Posterior vena cava (tissue), 2 donors: ENCODE measurements at regions of chr5 and their contacts with region 1.

Region 1: DNA sequence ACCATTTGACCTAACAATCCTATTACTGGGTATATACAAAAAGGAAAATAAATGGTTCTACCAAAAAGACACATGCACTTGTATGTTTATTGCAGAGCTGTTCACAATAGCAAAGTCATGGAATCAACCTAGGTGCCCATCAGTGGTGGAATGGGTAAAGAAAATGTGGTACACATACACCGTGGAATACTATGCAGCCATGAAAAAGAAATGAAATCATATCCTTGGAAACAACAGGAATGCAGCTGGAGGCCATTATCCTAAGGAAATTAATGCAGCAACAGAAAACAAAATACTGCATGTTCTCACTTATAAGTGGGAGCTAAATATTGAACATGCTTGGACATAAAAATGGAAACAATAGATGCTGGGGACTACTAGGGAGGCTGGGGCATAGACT is 534.1 kb upstream of the SGCD start:
- DNase-seq: no peak

Region 2: GRCh38 chr5:155631116-155631515 is 161.8 kb before region 1 on chr5:
- intact Hi-C with region 1: no loop called
- DNase-seq: no peak

Region 3: DNA sequence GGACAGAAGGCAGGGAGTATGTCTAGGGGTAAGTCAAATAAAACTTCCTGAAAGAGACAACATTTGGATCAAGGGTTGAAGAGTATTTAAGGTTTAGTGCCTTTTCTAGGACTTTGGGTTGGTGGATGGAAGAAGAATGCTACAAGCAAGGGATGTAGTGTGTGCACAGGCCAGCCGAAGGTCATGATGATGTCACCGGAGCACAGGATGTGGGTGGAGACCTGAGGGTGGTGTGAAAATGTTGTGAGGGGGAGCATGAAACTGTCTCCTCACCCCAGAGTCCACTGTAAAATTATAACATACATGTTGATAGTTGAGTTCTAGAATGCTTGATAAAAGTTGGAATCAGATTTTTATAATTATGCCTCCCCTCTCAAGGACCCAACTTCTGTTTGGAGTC is 19.2 kb before region 1 on chr5:
- intact Hi-C with region 1: loop called in 1 of 2 experiments (anchors 1 kb)
- DNase-seq: no peak

Region 4: DNA sequence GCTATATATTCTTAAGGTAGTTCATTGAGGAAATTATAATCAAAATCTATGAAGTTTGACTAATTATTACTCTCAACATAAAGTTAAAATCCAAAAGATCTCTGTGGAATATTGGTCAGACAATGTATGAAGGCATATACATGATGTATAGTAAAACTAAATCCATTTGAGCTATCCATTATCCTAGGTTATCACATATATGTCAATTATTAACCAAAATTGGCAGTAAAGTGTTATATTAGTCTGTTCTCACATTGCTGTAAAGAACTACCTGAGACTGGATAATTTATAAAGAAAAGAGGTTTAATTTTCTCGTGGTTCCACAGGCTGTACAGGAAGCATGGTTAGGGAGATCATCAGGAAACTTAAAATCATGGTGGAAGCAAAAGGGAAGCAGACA is 22.4 kb after region 1 on chr5:
- intact Hi-C with region 1: no loop called
- DNase-seq: no peak